Activated CD4-positive, alpha-beta memory T cell treated with anti-CD3 and anti-CD28 coated beads for 36 hours (primary cell): ENCODE measurements at regions of chr22 and their contacts with region 1.

Region 1: DNA sequence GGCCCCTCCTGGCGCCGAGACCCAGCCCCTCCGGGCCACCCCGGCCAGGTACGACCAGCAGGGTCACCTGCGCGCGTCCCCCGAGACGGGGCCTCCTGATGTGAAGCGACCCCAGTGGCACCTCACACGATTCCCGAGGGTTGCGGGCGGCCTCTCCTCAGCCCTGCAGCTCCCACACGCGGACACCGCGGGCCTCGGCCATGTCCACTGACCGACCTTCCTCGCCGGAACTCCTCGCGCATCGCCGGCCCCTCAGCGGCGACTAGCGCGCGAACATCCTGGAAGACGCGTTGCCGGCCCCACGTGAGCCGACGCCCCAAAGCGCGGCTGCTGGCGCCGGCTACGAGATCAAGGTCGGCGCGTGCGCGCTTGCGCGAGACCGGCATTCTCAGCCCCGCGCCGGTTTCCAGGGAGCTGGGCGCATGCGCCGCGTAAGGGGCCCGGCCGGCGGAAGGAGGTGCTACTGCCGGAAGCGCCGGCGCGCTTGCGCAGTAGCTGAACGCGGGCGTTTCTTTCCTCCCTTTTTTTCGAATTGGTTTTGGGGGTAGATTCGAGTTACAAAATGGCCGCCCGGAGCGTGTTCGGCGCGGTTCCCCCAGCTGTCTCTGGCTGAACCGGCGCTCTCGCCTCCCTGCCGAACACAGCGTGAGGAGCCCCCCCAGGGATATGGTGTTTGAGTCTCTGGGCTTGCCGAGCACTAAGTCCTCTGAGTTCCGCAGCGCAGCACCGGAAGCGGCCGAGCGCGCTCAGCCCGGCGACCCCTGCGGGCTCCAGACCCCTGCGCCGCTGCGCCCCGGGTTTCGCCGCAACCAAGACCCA is at the start of gene NUP50:
- DNase-seq: peak; percentile 97
- H3K4me3 Mint-ChIP-seq: peak within 1 kb of the TSS; percentile 99
- H3K27ac Mint-ChIP-seq: peak within 1 kb of the TSS; percentile 95
- H3K4me1 Mint-ChIP-seq: peaks cover 53% of the 10 kb centered on the region
- H3K27me3 Mint-ChIP-seq: no peaks in the 10 kb centered on the region
- total RNA-seq, gene NUP50: 150 to 156 TPM

Region 2: GRCh38 chr22:45101515-45102227 is 62.0 kb before region 1 on chr22:
- CTCF ChIA-PET with region 1: interaction called, 14 read pairs
- POLR2A ChIA-PET with region 1: no interaction called
- intact Hi-C with region 1: no loop called
- DNase-seq: peak; percentile 67
- H3K4me3 Mint-ChIP-seq: no peak overlapping the region
- H3K27ac Mint-ChIP-seq: no peak overlapping the region
- H3K4me1 Mint-ChIP-seq: peaks cover 5% of the 10 kb centered on the region
- H3K27me3 Mint-ChIP-seq: peaks cover 27% of the 10 kb centered on the region

Region 3: DNA sequence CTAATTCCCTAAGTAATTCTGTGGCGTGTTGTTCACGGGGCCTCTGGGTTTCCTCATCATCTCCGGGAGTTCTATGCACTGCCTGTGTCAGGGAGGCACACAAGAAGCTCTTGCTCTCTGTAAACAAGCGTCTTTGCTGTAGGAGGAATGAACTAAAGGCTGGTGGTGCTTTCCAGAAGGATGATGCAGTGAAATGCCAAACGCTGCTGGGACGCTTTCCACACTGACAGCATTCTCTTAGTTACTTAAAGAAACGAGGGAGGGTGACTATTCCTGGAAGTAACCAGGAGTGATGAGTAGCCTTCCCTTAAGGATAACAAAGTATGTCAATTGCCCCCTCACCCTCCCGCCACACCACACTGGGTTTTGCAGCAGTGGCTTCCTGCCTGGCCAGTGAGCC is 38.5 kb before region 1 on chr22:
- CTCF ChIA-PET with region 1: interaction called, 4 read pairs
- POLR2A ChIA-PET with region 1: interaction called, 3 read pairs
- intact Hi-C with region 1: loop called (anchors 5 kb)
- DNase-seq: no peak
- H3K4me3 Mint-ChIP-seq: no peak overlapping the region
- H3K27ac Mint-ChIP-seq: no peak overlapping the region
- H3K4me1 Mint-ChIP-seq: peaks cover 12% of the 10 kb centered on the region
- H3K27me3 Mint-ChIP-seq: peaks cover 3% of the 10 kb centered on the region

Region 4: GRCh38 chr22:45318168-45318557 is 154.5 kb after region 1 on chr22:
- CTCF ChIA-PET with region 1: no interaction called
- POLR2A ChIA-PET with region 1: no interaction called
- intact Hi-C with region 1: loop called (anchors 5 kb)
- DNase-seq: peak; percentile 95
- H3K4me3 Mint-ChIP-seq: peak overlapping the region; percentile 75
- H3K27ac Mint-ChIP-seq: peak overlapping the region; percentile 95
- H3K4me1 Mint-ChIP-seq: peaks cover 67% of the 10 kb centered on the region
- H3K27me3 Mint-ChIP-seq: no peaks in the 10 kb centered on the region

Region 5: DNA sequence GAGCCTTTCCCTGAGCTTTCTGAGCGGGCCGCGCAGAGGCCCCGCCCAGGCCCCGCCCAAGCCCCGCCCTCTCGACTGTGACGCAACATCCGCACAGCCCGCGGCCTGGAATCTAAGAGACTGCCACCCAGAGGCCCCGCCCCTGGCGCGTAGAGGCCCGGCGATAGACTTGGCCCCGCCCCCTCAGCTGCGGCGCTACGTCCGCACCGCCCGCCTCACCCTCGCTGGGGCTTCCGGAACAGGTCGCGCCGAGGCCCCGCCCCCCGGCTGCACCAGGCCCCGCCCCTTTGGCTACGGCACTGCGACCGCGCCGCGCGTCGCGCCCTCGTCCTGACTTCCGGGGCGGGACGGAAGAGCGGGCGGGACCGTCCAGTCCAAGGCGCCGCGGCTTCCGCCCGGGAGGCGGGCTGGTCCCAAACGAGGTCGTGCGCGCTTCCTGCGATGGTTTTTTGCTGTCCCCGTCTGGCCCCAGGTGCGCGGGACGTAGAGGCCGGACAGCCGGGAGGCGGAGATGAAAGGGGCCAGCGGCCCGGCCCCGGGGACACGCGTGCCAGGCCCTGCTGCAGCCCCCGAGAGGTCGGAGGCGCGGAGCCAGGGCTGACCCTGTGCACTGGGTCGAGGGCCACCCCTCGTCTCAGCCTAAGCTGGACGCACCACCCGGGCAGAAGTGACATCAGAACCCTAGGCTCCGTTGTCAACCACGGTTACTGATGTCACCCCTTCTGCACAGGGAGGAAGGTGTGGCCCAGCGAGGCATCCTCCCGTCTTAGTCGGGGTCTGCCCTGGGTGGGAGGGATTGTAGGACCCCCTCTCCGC is 872.3 kb after region 1 on chr22:
- CTCF ChIA-PET with region 1: no interaction called
- POLR2A ChIA-PET with region 1: no interaction called
- intact Hi-C with region 1: loop called (anchors 10 kb)
- DNase-seq: peak; percentile 100
- H3K4me3 Mint-ChIP-seq: peak overlapping the region; percentile 83
- H3K27ac Mint-ChIP-seq: peak overlapping the region; percentile 86
- H3K4me1 Mint-ChIP-seq: peaks cover 12% of the 10 kb centered on the region
- H3K27me3 Mint-ChIP-seq: no peaks in the 10 kb centered on the region